ENCODE measurements at regions of chr19 and their contacts with region 1.

Region 1: GRCh38 chr19:5904352-5905113 is at the start of gene VMAC:
- DNase-seq: peak; percentile 100
- ATAC-seq: peak; percentile 87
- H3K4me3 Mint-ChIP-seq: peak within 1 kb of the TSS; percentile 94
- H3K27ac Mint-ChIP-seq: peak within 1 kb of the TSS; percentile 98
- H3K4me1 Mint-ChIP-seq: peaks cover 32% of the 10 kb centered on the region
- H3K27me3 Mint-ChIP-seq: no peaks in the 10 kb centered on the region
- total RNA-seq, gene VMAC: 2.3 to 2.8 TPM

Region 2: DNA sequence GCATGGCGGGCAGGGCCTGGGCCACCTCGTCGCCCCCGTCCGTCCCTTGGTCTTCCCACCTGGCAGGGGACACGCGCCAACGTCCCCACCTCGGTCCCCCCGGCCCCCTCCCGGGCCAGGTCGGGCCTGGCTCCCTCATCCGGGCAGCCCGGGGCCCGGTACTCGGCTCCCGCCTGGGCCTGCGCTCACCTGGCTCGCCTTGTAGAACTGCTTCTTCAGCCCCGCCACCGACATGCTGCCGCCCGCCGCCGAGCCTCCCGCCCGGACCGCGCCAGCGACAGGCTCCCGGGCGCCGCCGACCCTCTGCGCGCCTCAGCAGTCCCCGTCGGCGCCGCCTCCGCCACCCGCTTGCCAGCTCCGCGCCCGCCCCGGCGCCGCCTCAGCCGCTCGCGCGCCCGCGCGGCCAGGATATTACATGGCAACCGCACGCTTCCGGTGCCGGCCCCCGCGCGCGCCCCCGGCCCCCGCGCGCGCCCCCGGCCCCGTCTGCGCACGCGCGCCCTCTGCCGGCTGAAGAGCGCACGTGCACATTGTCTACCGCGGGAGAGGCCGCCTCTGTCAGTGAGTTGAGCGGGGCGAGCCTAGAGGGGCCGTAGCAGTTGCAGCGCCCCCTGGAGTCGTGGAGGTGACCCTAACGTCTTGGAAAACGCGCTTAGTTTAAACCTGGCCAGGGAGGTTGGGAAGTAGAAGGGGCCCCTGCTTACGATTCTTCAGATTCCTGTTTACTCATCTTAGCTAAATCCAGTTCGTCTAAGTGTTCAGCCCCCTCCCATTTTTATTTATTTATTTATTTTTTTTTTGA is 1504.2 kb before region 1 on chr19 and contains the start of gene SH3GL1:
- CTCF ChIA-PET with region 1: no interaction called
- POLR2A ChIA-PET with region 1: no interaction called
- intact Hi-C with region 1: loop called in 1 of 2 experiments (anchors 10 kb)
- DNase-seq: peak; percentile 95
- ATAC-seq: peak; percentile 54
- H3K4me3 Mint-ChIP-seq: peak within 1 kb of the TSS; percentile 93
- H3K27ac Mint-ChIP-seq: peak within 1 kb of the TSS; percentile 95
- H3K4me1 Mint-ChIP-seq: peaks cover 62% of the 10 kb centered on the region
- H3K27me3 Mint-ChIP-seq: no peaks in the 10 kb centered on the region
- total RNA-seq, gene SH3GL1: 42.0 to 46.8 TPM

Region 3: DNA sequence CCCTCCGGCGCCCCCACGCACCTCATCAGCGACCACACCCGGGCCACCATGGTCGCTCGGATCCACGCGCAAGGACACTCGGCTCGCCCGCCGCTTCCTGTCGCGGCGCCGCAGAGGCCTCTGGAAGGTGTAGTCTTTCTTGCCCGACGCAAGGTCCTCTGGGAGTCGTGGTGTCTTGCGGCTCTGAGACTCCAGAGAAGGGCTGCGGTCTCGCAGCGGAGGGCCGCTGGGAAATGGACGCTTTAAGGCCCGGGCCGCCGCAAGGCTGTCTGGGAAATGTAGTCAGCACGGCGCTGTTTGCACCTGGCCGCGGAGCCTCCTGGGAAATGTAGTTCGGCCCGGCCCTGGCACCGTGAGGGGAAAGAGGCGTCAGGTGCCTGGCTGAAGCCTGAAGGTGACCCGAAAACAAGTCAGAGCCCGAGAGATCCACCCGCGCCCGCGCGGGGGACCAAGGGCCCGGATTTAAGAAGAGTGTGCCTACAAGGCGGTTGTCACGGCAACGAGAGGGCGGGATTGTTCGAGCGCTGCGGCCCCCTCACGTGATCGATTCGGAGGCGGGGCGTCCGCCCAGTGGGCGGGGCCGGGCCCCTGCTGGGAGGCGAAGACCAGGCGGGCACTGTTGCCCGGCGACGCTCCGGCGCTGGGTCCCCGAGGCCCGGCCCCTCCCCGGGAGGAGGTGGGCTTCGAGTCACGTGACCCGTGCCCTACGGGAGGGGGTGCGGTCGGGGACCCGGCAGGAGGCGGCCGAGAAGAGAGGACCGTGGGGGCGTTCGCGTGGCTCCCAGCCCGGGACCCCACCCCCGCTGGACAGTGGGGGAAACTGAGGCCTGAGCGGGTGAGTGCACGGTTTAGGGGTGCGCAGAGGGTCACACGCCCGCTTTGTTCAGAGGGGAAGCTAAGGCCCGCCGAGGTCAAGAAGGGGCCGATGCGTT is 223.8 kb before region 1 on chr19 and contains the starts of genes HSD11B1L and MICOS13:
- CTCF ChIA-PET with region 1: no interaction called
- POLR2A ChIA-PET with region 1: no interaction called
- intact Hi-C with region 1: loop called (anchors 1 to 2 kb)
- DNase-seq: peak; percentile 99
- ATAC-seq: peak; percentile 97
- H3K4me3 Mint-ChIP-seq: peak within 1 kb of the TSS; percentile 99
- H3K27ac Mint-ChIP-seq: peak within 1 kb of the TSS; percentile 94
- H3K4me1 Mint-ChIP-seq: peaks cover 20% of the 10 kb centered on the region
- H3K27me3 Mint-ChIP-seq: no peaks in the 10 kb centered on the region
- total RNA-seq, gene HSD11B1L: 2.0 to 3.2 TPM
- total RNA-seq, gene MICOS13: 50.9 to 52.1 TPM

Region 4: GRCh38 chr19:5753743-5754142 is 150.8 kb before region 1 on chr19:
- CTCF ChIA-PET with region 1: no interaction called
- POLR2A ChIA-PET with region 1: no interaction called
- intact Hi-C with region 1: no loop called
- DNase-seq: no peak
- ATAC-seq: no peak
- H3K4me3 Mint-ChIP-seq: no peak overlapping the region
- H3K27ac Mint-ChIP-seq: no peak overlapping the region
- H3K4me1 Mint-ChIP-seq: no peaks in the 10 kb centered on the region
- H3K27me3 Mint-ChIP-seq: peaks cover 6% of the 10 kb centered on the region

Region 5: GRCh38 chr19:5803752-5804515 is 100.6 kb before region 1 on chr19:
- CTCF ChIA-PET with region 1: interaction called, 32 read pairs
- POLR2A ChIA-PET with region 1: interaction called, 16 read pairs
- intact Hi-C with region 1: loop called (anchors 1 kb)
- DNase-seq: peak; percentile 98
- ATAC-seq: peak; percentile 97
- H3K4me3 Mint-ChIP-seq: peak overlapping the region; percentile 63
- H3K27ac Mint-ChIP-seq: peak overlapping the region; percentile 47
- H3K4me1 Mint-ChIP-seq: peaks cover 21% of the 10 kb centered on the region
- H3K27me3 Mint-ChIP-seq: peaks cover 20% of the 10 kb centered on the region

Region 6: DNA sequence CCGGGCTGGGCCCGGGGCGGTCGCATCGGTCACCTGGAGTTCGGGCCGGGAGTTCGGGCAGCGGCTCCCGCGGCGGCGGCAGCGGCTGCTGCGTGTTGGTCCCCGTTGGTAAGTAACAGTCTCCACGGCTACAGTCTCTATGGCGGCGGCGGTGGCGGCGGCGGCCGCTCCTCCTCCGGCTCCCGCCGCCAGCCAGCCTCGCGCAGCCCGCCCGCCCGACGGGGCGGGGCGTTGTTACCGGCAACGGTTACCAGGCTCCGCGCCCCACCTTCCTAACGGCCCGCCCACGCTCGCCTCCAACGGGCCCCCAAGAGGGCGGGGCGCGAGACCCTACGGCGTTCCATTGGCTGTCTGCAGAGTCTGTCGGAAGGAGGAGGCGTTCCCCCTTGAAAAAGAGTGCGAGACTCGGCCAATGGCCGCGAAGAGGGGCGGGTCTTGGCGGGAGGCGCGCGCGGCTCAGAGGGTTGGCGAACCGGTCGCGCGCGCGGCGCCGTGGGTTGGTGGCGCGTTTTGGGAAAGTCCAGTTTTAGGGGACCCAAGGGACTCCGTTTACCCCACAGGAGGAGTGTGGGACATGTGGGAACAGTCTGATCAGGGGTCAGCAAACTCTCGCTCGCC is 205.9 kb after region 1 on chr19 and contains the start of gene RFX2:
- CTCF ChIA-PET with region 1: no interaction called
- POLR2A ChIA-PET with region 1: no interaction called
- intact Hi-C with region 1: loop called in 1 of 2 experiments (anchors 1 kb)
- DNase-seq: peak; percentile 100
- ATAC-seq: peak; percentile 98
- H3K4me3 Mint-ChIP-seq: peak within 1 kb of the TSS; percentile 76
- H3K27ac Mint-ChIP-seq: peak within 1 kb of the TSS; percentile 60
- H3K4me1 Mint-ChIP-seq: peaks cover 23% of the 10 kb centered on the region
- H3K27me3 Mint-ChIP-seq: peaks cover 16% of the 10 kb centered on the region
- total RNA-seq, gene RFX2: 8.6 to 8.9 TPM

Region 7: DNA sequence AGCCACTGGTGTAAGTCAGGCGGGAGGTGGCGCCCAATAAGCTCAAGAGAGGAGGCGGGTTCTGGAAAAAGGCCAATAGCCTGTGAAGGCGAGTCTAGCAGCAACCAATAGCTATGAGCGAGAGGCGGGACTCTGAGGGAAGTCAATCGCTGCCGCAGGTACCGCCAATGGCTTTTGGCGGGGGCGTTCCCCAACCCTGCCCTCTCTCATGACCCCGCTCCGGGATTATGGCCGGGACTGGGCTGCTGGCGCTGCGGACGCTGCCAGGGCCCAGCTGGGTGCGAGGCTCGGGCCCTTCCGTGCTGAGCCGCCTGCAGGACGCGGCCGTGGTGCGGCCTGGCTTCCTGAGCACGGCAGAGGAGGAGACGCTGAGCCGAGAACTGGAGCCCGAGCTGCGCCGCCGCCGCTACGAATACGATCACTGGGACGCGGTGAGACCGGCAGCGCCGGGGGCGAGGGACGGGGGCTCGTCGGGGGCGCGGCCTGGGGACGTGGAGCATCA is 468.1 kb after region 1 on chr19 and contains the start of gene ALKBH7:
- CTCF ChIA-PET with region 1: no interaction called
- POLR2A ChIA-PET with region 1: no interaction called
- intact Hi-C with region 1: loop called (anchors 1 to 5 kb)
- DNase-seq: peak; percentile 98
- ATAC-seq: peak; percentile 84
- H3K4me3 Mint-ChIP-seq: peak within 1 kb of the TSS; percentile 80
- H3K27ac Mint-ChIP-seq: peak within 1 kb of the TSS; percentile 92
- H3K4me1 Mint-ChIP-seq: peaks cover 11% of the 10 kb centered on the region
- H3K27me3 Mint-ChIP-seq: no peaks in the 10 kb centered on the region
- total RNA-seq, gene ALKBH7: 22.8 to 44.7 TPM